Activated CD4-positive, alpha-beta T cell treated with anti-CD3 and anti-CD28 coated beads, Interleukin-2, amount 10 ng/mL, durations not matched to agents 24 days and 14 days (primary cell): ENCODE measurements at regions of chr7 and their contacts with region 1.

Region 1: DNA sequence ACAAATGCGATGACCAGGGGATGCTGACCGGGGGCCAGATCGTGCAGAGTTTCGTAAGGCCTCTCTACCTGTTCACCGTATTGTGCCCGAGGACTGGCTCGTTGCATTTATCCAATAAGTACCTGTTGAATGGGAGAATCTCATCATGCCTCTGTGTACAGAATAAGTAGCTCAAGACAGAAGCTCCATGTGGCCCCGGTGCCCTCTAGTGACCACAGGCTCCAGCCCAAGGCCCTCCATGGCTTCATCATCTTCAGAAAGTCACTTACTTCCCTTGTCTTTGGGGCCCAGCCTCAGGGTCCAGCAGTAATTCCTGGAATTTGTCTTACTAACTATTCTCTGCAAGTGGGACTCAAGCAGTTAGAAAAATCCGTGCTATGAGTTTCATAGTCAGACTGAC is 151.0 kb downstream of the CHN2 start:
- DNase-seq: peak; percentile 58
- H3K4me3 Mint-ChIP-seq: no peak overlapping the region
- H3K27ac Mint-ChIP-seq: no peak overlapping the region
- H3K4me1 Mint-ChIP-seq: no peaks in the 10 kb centered on the region
- H3K27me3 Mint-ChIP-seq: peaks cover 10% of the 10 kb centered on the region

Region 2: DNA sequence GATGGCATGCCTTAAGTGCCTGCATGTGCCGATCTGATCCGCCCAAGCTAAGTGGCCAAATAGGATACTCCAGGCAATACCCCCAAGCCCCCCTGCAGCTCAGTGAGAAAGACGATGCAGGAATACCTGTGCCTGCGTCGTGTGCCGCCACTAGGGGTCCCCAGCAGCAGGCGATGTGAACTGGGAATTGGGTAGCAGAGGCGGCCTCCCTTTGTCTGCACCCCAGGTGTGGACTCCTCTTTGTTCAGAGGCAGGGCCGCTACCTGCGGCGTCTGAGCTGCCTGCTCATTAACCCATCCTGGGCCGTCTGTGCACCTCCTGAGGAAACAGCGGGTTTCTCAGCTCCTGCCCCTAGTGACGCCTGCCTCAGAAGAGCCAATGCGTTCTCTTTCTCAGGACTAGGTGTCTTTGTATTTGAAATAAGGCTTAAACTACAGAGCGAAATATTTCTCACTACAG is 155.8 kb before region 1 on chr7:
- intact Hi-C with region 1: loop called (anchors 10 kb)
- DNase-seq: peak; percentile 82
- H3K4me3 Mint-ChIP-seq: no peak overlapping the region
- H3K27ac Mint-ChIP-seq: no peak overlapping the region
- H3K4me1 Mint-ChIP-seq: peaks cover 2% of the 10 kb centered on the region
- H3K27me3 Mint-ChIP-seq: peaks cover 43% of the 10 kb centered on the region